Pancreas (tissue), 10 donors: ENCODE measurements at regions of chrX and their contacts with region 1.

Region 1: GRCh38 chrX:44244008-44244407 is 99.5 kb downstream of the EFHC2 start:
- DNase-seq: no peak
- ATAC-seq: peak; percentile 43 to 75 (median 70)
- H3K4me3 ChIP-seq: no peak overlapping the region
- H3K27ac ChIP-seq: no peak overlapping the region
- H3K4me1 ChIP-seq: no peaks in the 10 kb centered on the region
- H3K27me3 ChIP-seq: peaks cover 0 to 10% (median 0%) of the 10 kb centered on the region in 4 donors
- CTCF ChIP-seq: peak; percentile 14 to 36 (median 28)

Region 2: DNA sequence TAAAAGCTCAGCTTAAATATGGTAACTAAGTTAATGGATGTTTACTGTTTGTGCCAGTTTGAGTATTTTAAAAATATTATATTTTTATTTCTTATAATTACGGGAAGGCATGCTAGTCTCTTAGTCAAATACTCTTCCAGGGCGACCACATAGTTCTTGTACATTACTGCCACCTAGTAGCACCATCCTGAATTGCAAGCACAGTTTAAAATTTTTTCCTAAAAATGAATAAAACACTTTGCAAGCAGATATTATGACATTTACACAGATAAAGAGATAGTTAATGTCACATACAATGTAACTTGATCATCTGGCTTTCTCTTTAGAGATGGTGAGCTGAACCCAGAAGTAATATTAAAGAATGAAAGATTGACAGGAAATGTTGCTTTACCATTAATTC is 282.3 kb before region 1 on chrX:
- intact Hi-C with region 1: loop called in 2 of 3 experiments (anchors 5 to 10 kb)
- DNase-seq: no peak
- ATAC-seq: no peak
- H3K4me3 ChIP-seq: no peak overlapping the region
- H3K27ac ChIP-seq: no peak overlapping the region
- H3K4me1 ChIP-seq: no peaks in the 10 kb centered on the region
- H3K27me3 ChIP-seq: peaks cover 0 to 18% (median 3%) of the 10 kb centered on the region in 4 donors
- CTCF ChIP-seq: no peak

Region 3: DNA sequence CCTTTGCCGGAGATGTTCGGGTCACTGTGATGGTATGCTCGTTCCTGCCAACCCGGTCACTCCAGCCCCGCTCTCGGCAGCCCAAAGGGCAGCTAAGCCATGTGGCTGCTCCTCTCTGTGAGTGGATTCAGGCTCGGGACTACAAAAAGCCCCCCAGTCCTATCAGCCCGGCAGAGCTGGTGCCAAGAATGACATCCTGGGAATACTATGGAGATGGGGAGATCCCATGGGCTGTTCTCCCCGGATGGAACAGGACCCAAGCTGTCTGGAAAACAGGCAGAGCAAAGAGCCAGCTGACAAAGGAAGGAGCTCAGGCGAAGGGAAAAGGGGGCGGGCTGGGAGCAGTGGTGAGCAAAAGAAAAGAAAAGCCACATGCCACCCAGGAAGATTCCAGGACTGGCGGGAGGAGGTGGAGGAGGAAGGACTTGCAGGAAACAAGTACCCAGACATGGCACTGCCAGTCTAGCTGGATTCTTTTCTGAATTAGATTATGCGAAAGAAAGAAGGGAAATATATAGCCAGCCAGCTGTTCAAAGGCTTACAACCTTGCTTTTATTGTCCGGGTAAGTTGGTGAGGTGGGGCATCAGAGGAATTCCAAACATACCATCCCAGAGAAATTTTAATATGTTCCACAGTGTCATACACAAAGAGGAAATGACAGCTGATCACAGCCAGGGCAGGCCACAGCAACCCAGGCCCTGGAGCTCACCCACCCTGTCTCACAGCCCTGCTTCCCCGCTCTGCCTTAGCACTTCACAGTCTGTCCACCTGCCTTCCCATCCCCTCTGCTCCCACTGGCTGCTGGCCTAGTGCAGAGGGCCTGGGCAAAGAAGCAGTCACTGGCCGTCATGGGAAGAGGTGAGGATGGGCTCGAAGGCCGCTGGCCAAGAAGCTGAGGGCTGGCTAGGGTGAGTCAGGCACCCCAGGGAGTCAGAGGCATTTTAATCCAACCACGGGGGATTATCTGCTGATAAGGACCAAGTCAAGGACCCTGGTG is 274.2 kb before region 1 on chrX:
- intact Hi-C with region 1: loop called in 1 of 3 experiments (anchors 10 kb)
- DNase-seq: peak in 1 of 6 donors; percentile 27
- ATAC-seq: no peak
- H3K4me3 ChIP-seq: no peak overlapping the region
- H3K27ac ChIP-seq: no peak overlapping the region
- H3K4me1 ChIP-seq: no peaks in the 10 kb centered on the region
- H3K27me3 ChIP-seq: peaks cover 0 to 53% (median 0%) of the 10 kb centered on the region in 4 donors
- CTCF ChIP-seq: no peak

Region 4: GRCh38 chrX:44462850-44463249 is 218.8 kb after region 1 on chrX:
- intact Hi-C with region 1: no loop called
- DNase-seq: peak in 1 of 6 donors; percentile 14
- ATAC-seq: no peak
- H3K4me3 ChIP-seq: no peak overlapping the region
- H3K27ac ChIP-seq: no peak overlapping the region
- H3K4me1 ChIP-seq: no peaks in the 10 kb centered on the region
- H3K27me3 ChIP-seq: peaks cover 0 to 5% (median 0%) of the 10 kb centered on the region in 4 donors
- CTCF ChIP-seq: no peak

Region 5: DNA sequence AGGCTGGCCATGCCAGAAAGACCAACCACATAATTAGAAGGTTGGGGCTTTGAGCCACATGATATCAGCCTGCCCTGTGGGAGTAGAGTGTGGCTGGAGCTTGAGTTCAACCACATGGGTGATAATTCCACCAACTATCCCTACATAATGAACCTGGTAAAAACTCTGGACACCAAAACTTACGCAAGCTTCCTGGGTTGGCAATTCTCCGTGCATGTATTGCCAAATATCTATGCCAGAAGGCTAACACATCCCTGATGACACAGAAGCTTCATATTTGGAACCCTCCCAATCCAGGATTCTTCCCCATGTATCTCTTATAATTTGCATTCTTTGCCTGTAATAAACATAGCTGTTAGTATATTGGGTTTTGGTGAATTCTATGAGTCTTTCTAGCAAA is 230.4 kb after region 1 on chrX:
- intact Hi-C with region 1: no loop called
- DNase-seq: no peak
- ATAC-seq: no peak
- H3K4me3 ChIP-seq: no peak overlapping the region
- H3K27ac ChIP-seq: no peak overlapping the region
- H3K4me1 ChIP-seq: no peaks in the 10 kb centered on the region
- H3K27me3 ChIP-seq: peaks cover 0 to 4% (median 0%) of the 10 kb centered on the region in 4 donors
- CTCF ChIP-seq: no peak

Region 6: DNA sequence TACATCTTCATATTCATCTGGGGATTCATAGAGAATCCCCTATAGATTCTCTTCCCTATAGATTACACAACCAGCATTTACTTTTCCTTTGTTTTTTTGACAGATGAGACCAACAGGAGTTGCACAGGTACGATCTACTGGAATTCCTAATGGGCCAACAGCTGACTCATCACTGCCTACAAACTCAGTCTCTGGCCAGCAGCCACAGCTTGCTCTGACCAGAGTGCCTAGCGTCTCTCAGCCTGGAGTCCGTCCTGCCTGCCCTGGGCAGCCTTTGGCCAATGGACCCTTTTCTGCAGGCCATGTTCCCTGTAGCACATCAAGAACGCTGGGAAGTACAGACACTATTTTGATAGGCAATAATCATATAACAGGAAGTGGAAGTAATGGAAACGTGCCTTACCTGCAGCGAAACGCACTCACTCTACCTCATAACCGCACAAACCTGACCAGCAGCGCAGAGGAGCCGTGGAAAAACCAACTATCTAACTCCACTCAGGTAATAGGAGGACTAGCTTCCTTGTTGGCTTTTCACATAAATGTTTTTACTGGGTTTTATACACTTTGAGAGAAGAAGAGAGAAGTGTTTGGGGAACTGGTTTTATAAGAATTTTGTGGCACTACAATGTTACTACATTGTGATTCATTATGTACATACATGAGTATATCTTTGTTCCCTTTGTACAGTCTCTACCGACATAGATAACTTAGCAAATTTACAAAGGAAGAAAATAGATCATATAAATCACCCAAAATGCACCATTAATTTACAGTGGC is 819.5 kb after region 1 on chrX:
- intact Hi-C with region 1: no loop called
- DNase-seq: no peak
- ATAC-seq: peak in 2 of 4 donors; percentile 30 to 37
- H3K4me3 ChIP-seq: no peak overlapping the region
- H3K27ac ChIP-seq: no peak overlapping the region
- H3K4me1 ChIP-seq: no peaks in the 10 kb centered on the region
- H3K27me3 ChIP-seq: no peaks in the 10 kb centered on the region
- CTCF ChIP-seq: no peak